Activated T-helper 2 cell treated with anti-CD3 and anti-CD28 coated beads, Interferon-gamma antibody, Interleukin-2, Interleukin-4, amounts not matched to agents 10 μg/mL and 5 μg/mL and 100 μg/mL, durations not matched to agents 14 hours and 24 hours and 36 hours (primary cell): ENCODE measurements at regions of chr11 and their contacts with region 1.

Region 1: GRCh38 chr11:95067039-95067840 is 521 bp downstream of the SRSF8 start:
- DNase-seq: peak; percentile 70
- H3K4me3 Mint-ChIP-seq: peak overlapping the region; percentile 91
- H3K27ac Mint-ChIP-seq: peak overlapping the region; percentile 93
- H3K4me1 Mint-ChIP-seq: peaks cover 18% of the 10 kb centered on the region
- H3K27me3 Mint-ChIP-seq: peaks cover 16% of the 10 kb centered on the region

Region 2: GRCh38 chr11:94543695-94544645 is 523.3 kb before region 1 on chr11 and contains the start of gene FUT4:
- intact Hi-C with region 1: loop called (anchors 5 kb)
- DNase-seq: peak; percentile 72
- H3K4me3 Mint-ChIP-seq: peak within 1 kb of the TSS; percentile 99
- H3K27ac Mint-ChIP-seq: peak within 1 kb of the TSS; percentile 100
- H3K4me1 Mint-ChIP-seq: peaks cover 32% of the 10 kb centered on the region
- H3K27me3 Mint-ChIP-seq: no peaks in the 10 kb centered on the region
- total RNA-seq, gene FUT4: 8.4 and 8.9 TPM in 2 replicates

Region 3: DNA sequence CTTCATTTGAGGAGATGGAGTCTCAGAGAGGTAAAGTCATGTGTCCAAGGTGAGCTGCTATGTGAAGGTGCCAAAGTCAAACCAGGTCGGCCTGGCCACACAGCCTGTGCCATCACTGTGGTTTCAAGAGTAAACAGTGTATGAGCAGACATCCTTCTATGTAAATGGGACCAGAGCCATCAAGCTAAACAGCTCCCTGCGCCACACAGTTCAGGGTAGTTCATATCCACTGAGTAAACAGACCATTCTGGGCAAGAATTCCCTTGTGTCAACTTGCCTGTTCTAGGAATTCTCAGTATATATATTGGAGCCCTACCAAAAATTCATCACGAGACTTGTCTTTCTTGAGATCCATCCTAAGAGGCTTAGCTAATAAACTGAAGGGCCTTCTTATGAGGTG is 221.6 kb before region 1 on chr11:
- intact Hi-C with region 1: no loop called
- DNase-seq: no peak
- H3K4me3 Mint-ChIP-seq: no peak overlapping the region
- H3K27ac Mint-ChIP-seq: no peak overlapping the region
- H3K4me1 Mint-ChIP-seq: no peaks in the 10 kb centered on the region
- H3K27me3 Mint-ChIP-seq: peaks cover 2% of the 10 kb centered on the region

Region 4: DNA sequence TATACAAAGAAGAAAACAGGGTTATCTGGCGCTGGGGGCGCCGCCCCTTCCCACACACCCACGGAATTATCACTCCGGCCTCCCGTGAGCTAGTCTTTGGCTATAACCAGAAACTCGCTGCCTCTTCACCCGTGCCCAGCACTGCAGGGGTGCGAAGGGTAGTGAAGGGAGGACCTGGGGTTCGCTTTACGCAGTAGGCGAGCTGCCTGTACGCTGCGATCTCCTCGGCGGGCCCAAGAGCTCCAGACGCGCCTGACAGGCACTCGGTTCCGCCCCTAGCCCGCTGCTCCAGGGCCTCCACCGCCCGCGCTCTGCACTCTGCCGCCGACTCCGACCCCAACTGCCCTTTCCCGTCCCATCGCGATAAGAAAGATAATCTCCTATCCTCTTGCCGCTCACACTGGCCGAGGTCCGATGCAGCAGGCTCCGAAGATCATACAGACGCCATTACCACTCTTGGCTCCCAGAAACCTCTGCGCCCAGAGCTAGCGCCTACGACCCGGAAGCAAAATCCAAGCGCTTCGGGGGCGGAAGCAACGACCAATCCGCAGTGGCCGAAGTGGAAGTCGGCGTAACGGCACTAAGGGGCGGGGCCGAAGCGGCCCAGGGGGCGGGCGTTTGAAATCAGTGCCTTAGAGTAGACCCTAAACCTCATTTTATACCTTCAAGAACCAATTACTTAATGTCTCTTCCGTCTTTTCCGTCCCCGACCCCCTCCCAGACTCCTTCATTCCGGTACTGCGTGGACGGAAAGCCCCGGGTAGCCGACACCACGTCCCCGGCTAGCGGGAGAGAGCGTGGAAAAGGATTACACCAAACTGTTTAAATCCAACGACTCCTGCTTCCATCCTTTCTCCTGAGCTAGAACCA is 93.9 kb before region 1 on chr11 and contains the starts of genes CWC15 and KDM4D:
- intact Hi-C with region 1: loop called (anchors 1 kb)
- DNase-seq: peak; percentile 91
- H3K4me3 Mint-ChIP-seq: peak within 1 kb of the TSS; percentile 95
- H3K27ac Mint-ChIP-seq: peak within 1 kb of the TSS; percentile 91
- H3K4me1 Mint-ChIP-seq: peaks cover 28% of the 10 kb centered on the region
- H3K27me3 Mint-ChIP-seq: no peaks in the 10 kb centered on the region
- total RNA-seq, gene CWC15: 86.1 and 94.4 TPM in 2 replicates
- total RNA-seq, gene KDM4D: 0.48 and 0.84 TPM in 2 replicates

Region 5: GRCh38 chr11:95028357-95028756 is 38.9 kb before region 1 on chr11:
- intact Hi-C with region 1: no loop called
- DNase-seq: no peak
- H3K4me3 Mint-ChIP-seq: no peak overlapping the region
- H3K27ac Mint-ChIP-seq: no peak overlapping the region
- H3K4me1 Mint-ChIP-seq: no peaks in the 10 kb centered on the region
- H3K27me3 Mint-ChIP-seq: peaks cover 8% of the 10 kb centered on the region

Region 6: DNA sequence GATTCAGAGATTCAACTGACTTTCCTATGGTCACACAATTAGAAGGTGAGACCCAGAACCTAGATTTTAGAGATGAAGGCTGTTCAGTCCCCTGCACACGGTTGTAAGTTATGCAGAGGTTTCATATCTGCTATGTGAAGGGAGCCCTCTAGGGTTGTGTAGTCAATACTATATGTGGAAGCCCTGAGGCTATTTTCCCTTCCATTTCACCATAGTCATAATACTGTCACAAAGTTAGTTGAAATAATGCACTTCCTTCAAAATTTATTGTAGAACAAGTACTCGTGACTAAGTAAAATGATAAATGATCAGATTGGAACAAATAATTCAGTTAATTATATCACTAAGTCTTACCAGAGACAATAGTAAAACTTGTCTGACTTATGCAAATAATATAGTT is 71.2 kb after region 1 on chr11:
- intact Hi-C with region 1: loop called (anchors 1 kb)
- DNase-seq: no peak
- H3K4me3 Mint-ChIP-seq: no peak overlapping the region
- H3K27ac Mint-ChIP-seq: no peak overlapping the region
- H3K4me1 Mint-ChIP-seq: peaks cover 24% of the 10 kb centered on the region
- H3K27me3 Mint-ChIP-seq: peaks cover 6% of the 10 kb centered on the region

Region 7: GRCh38 chr11:95699631-95700470 is 632.6 kb after region 1 on chr11:
- intact Hi-C with region 1: loop called (anchors 5 kb)
- DNase-seq: no peak
- H3K4me3 Mint-ChIP-seq: peak overlapping the region; percentile 62
- H3K27ac Mint-ChIP-seq: peak overlapping the region; percentile 93
- H3K4me1 Mint-ChIP-seq: peaks cover 54% of the 10 kb centered on the region
- H3K27me3 Mint-ChIP-seq: no peaks in the 10 kb centered on the region